ENCODE measurements at regions of chr6 and their contacts with region 1.

Region 1: DNA sequence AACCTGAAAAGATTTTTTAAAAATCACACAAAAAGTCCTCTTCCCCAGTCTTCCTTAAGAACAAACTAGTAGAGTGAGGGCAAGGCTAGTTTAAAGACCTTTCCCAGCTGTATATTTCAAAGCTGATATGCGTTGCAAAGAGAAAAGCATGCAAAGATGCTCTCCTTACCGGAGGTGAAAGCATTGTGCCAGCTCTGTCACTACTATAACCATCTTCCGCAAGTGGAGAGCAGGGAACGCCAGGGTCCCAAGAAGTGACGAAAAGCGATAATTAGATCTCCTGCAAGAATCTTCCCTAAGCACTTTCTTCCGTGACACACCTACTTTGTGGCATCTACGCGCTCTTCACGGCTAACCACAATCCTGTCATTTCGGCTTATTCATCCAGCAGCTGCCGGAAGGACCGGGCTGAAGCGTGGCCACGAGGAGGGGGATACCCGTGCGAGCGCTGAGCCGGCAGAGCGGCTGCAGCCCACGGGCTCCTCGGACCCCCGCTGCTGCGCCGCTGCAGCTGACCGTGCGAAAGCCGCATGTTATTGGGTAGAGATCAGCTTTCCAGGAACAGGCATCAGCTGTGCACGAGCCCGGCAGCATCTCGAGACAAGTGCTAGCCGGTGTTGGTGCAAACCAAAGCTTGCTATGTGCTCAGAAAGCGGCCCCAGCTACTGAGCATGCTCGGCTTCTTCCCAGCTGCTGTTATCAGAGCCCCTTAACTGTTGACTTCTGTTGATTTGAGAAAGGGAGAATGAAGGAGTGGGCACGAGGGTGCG is 57.2 kb upstream of the ARHGAP18 start:
- DNase-seq: no peak
- ATAC-seq: peak; percentile 83
- H3K4me3 ChIP-seq: peak overlapping the region; percentile 43 to 62
- H3K27ac ChIP-seq: no peak overlapping the region
- H3K4me1 ChIP-seq: peaks cover 6% of the 10 kb centered on the region
- H3K27me3 ChIP-seq: peaks cover 26% of the 10 kb centered on the region
- CTCF ChIP-seq: no peak

Region 2: DNA sequence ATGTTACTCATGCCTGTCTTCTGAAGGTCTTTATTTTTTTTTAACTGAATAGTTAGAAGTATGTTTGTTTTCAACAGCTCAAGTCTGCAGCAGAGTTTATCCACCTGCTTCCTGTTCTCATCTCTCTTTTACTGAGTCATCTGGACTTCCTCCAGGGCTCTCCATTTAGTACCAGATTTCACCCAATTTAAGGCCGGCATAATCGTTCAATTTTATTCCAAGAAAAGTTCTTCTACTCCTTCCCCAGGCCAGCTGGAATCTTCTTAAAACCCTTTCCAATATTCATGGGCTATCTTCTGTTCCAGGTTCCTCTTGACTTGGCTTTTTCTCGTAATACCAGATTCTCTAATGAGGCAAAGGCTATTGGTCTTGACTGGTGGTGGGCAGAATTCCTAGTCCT is 963.2 kb before region 1 on chr6:
- CTCF ChIA-PET with region 1: no interaction called
- POLR2A ChIA-PET with region 1: no interaction called
- in situ Hi-C with region 1: no loop called
- intact Hi-C with region 1: no loop called
- DNase-seq: no peak
- ATAC-seq: no peak
- H3K4me3 ChIP-seq: no peak overlapping the region
- H3K27ac ChIP-seq: no peak overlapping the region
- H3K4me1 ChIP-seq: no peaks in the 10 kb centered on the region
- H3K27me3 ChIP-seq: no peaks in the 10 kb centered on the region
- CTCF ChIP-seq: no peak

Region 3: DNA sequence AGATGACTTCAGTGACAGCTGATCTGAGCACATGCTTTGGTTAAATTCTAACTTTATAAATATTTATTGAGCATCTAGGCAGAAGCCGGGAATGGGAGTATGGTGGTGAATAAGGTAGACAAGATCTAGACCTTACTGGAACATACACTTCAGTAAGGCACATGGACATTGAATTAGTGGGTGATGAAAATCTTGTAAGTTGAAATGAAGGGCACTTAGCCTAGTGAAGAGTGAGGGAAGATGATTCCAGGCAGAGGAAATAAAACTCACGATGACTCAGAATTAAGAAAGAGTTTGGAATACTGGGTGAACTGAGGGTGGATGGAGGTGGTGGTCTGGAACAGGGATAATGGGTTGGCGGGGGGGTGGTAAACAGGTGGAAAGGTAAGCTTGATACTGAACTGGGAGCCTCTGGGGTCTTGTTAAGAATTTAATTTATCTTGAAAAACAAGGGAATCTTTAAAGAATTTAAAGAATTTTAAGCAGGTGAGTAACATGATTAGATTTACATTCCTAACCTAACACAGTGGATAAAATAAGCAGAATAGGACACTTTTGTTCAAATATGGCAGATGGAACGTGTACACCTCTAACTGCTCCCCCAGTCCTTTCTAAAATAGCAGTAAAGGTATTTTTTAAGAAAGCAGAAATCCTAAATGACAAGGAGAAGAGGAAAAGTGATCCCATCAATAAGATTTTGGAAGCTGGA is 18.1 kb after region 1 on chr6:
- CTCF ChIA-PET with region 1: interaction called, 10 read pairs
- POLR2A ChIA-PET with region 1: no interaction called
- in situ Hi-C with region 1: no loop called
- intact Hi-C with region 1: no loop called
- DNase-seq: no peak
- ATAC-seq: no peak
- H3K4me3 ChIP-seq: no peak overlapping the region
- H3K27ac ChIP-seq: no peak overlapping the region
- H3K4me1 ChIP-seq: no peaks in the 10 kb centered on the region
- H3K27me3 ChIP-seq: no peaks in the 10 kb centered on the region
- CTCF ChIP-seq: no peak